Right ventricle myocardium superior (tissue), 1 donor: ENCODE measurements at regions of chr2 and their contacts with region 1.

Region 1: GRCh38 chr2:115083225-115083624 is 640.8 kb downstream of the DPP10 start:
- DNase-seq: no peak
- ATAC-seq: no peak

Region 2: DNA sequence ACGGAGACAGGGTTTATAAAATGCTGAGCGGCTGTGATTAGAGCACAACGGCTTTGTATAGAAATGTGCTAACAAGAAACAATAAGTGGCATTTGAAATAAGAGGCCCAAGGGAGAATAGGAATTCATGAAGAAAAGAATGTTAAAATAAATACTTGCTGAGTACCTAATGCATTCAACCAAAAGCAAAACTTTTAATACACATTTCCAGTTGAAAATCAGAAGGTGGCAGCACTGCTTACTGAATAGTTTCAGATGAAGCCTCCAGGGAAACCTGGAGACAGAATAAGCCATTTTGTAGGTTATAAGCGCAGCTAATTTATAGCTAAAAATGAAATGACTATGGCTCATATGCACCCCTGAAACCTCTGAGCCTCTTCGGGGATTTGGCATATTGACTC is 354.2 kb before region 1 on chr2:
- intact Hi-C with region 1: loop called (anchors 5 kb)
- DNase-seq: no peak
- ATAC-seq: no peak

Region 3: DNA sequence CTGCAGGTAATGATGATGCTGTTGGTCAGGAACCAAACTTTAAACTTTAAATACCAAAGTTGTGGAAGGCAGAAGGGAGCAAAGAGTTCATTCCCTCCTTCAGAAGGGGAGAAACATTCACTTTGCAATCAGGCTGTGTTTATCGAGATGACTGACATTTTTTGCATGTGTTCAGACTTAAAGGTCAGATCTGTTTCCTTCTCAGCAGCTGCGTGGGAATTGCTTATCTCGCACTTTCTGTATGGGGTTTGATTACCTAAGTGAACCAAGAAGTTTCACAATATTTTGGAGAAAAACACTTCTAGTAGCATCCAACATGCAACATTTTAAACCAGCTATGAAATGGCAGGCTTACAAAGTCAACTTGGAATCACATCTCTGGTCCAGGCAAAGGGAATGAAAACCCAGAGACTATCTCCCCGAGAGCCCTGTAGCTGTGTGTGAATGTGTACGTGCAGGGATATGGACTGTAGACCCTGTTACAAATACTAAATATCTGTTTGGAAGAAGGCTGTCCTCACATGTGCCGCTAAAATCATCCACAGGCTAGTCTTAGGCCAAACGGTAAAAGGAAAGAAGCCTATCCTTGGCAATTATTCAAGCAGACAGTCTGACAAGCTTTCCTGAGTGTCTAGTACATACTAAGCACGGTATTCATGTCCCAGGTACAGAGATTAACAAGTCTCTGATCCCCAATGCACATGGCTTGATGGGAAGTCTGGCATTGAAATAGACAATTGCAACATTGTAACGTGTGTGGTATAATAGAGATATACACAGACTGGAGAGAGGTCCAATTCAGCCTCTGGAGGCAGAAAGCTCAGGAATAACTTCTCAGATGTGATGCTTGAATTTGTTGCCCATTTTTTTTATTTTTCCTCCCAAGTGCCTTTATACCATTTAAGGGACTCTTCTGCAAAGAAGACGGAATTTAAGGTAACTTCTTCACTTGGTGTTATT is 157.6 kb before region 1 on chr2:
- intact Hi-C with region 1: no loop called
- DNase-seq: no peak
- ATAC-seq: peak; percentile 91

Region 4: DNA sequence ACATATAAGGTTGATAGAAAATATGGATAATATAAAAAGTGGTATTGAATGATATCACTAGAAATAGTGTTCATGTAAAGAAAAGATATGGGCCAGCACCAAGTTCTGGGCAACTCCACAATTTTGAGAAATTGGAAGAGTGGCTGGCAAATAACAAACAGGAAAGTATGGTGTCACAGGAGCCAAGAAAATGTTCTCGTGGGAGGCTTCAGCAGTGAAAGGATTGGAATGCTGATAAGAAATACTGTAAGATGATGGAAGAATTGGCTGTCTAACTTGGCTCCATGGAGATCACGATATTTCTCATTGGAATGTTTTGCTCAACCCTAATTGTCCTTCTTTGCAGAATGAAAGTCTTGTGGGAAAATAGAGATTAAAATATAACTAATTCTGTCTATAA is 216.0 kb after region 1 on chr2:
- intact Hi-C with region 1: no loop called
- DNase-seq: no peak
- ATAC-seq: no peak